ENCODE measurements at regions of chr1 and their contacts with region 1.

Region 1: GRCh38 chr1:236394905-236395780 is 1.1 kb downstream of the EDARADD start:
- DNase-seq: peak; percentile 14
- H3K4me3 Mint-ChIP-seq: peak overlapping the region; percentile 66
- H3K27ac Mint-ChIP-seq: no peak overlapping the region
- H3K4me1 Mint-ChIP-seq: peaks cover 8% of the 10 kb centered on the region
- H3K27me3 Mint-ChIP-seq: peaks cover 86% of the 10 kb centered on the region
- CTCF ChIP-seq: no peak

Region 2: DNA sequence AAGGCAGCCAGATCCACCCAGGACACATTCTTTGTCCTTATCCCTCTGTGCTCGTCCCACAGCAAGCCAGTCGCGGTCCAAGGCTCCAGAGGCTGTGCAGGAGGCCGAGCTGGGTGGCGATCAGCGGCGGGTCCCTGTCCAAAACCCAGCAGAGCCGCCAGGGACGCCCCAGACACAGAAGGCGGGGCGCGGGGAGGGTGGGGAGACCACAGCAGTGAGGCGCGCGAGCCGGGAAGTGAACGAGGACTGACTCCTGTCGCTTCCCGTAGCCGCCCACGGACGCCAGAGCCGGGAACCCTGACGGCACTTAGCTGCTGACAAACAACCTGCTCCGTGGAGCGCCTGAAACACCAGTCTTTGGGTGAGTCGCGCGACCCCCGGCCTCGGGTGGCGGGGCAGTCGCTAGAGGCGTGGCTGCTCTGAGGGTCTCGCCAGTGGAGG is 128.6 kb after region 1 on chr1 and contains the start of gene LGALS8:
- CTCF ChIA-PET with region 1: no interaction called
- intact Hi-C with region 1: loop called (anchors 5 kb)
- DNase-seq: peak; percentile 80
- H3K4me3 Mint-ChIP-seq: peak within 1 kb of the TSS; percentile 93
- H3K27ac Mint-ChIP-seq: peak within 1 kb of the TSS; percentile 92
- H3K4me1 Mint-ChIP-seq: no peaks in the 10 kb centered on the region
- H3K27me3 Mint-ChIP-seq: no peaks in the 10 kb centered on the region
- CTCF ChIP-seq: no peak
- total RNA-seq, gene LGALS8: 46.5 and 50.3 TPM in 2 replicates

Region 3: GRCh38 chr1:236759252-236759859 is 364.2 kb after region 1 on chr1:
- CTCF ChIA-PET with region 1: no interaction called
- intact Hi-C with region 1: no loop called
- DNase-seq: peak; percentile 12
- H3K4me3 Mint-ChIP-seq: no peak overlapping the region
- H3K27ac Mint-ChIP-seq: no peak overlapping the region
- H3K4me1 Mint-ChIP-seq: no peaks in the 10 kb centered on the region
- H3K27me3 Mint-ChIP-seq: no peaks in the 10 kb centered on the region
- CTCF ChIP-seq: peak; percentile 60

Measured in Calu3 (cell line).